ENCODE measurements at regions of chr13 and their contacts with region 1.

Region 1: GRCh38 chr13:40230833-40231266 is 435.6 kb downstream of the FOXO1 start:
- DNase-seq: no peak
- ATAC-seq: no peak
- H3K4me3 ChIP-seq: no peak overlapping the region
- H3K27ac ChIP-seq: peak overlapping the region; percentile 97 to 99 (median 98)
- H3K4me1 ChIP-seq: peaks cover 42 to 55% of the 10 kb centered on the region in 2 donors
- H3K27me3 ChIP-seq: no peaks in the 10 kb centered on the region
- CTCF ChIP-seq: no peak
- POLR2A ChIP-seq: no peak

Region 2: DNA sequence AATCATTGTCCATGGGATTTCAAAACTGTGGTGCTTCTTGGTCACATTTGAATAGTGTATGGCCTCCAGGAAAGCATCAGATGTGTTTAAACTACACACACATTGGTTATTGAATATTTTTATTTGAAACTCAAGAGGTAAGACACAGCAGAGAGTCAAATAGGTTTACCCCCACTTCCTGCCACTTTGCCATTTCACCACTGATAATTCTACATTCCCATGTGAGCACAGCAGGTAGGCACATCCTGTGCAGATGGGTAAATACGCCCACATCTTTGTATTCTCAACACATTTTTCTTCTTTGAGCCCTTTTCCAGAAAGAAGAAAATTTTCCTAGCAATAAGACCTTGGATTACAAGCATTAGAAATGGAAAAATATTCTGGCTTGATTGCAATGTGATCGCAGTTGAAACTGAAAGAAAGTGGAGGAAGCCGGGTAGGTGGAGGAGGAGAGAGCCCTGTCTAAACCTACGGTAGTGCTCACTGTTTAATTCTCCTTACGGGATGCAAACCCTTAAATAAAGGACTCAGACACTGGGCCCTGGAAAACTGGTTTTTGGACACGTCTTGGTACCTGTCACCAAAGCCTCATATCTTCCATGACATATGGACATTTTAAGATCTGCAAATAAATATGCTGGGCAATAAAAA is 407.7 kb before region 1 on chr13:
- in situ Hi-C with region 1: no loop called
- intact Hi-C with region 1: no loop called
- DNase-seq: no peak
- ATAC-seq: no peak
- H3K4me3 ChIP-seq: no peak overlapping the region
- H3K27ac ChIP-seq: no peak overlapping the region
- H3K4me1 ChIP-seq: no peaks in the 10 kb centered on the region
- H3K27me3 ChIP-seq: no peaks in the 10 kb centered on the region
- CTCF ChIP-seq: no peak
- POLR2A ChIP-seq: no peak

Region 3: GRCh38 chr13:40113644-40114304 is 117.1 kb before region 1 on chr13:
- in situ Hi-C with region 1: no loop called
- intact Hi-C with region 1: loop called (anchors 5 kb)
- DNase-seq: no peak
- ATAC-seq: peak; percentile 37 to 42
- H3K4me3 ChIP-seq: no peak overlapping the region
- H3K27ac ChIP-seq: peak overlapping the region in 2 of 4 donors; percentile 26 to 40
- H3K4me1 ChIP-seq: peaks cover 10 to 18% of the 10 kb centered on the region in 2 donors
- H3K27me3 ChIP-seq: no peaks in the 10 kb centered on the region
- CTCF ChIP-seq: no peak
- POLR2A ChIP-seq: no peak

Region 4: GRCh38 chr13:40445557-40445990 is 214.7 kb after region 1 on chr13:
- in situ Hi-C with region 1: loop called in 1 of 4 experiments (anchors 10 kb)
- intact Hi-C with region 1: no loop called
- DNase-seq: peak; percentile 29 to 72
- ATAC-seq: peak; percentile 46 to 48
- H3K4me3 ChIP-seq: no peak overlapping the region
- H3K27ac ChIP-seq: peak overlapping the region; percentile 19 to 45 (median 42)
- H3K4me1 ChIP-seq: peaks cover 30 to 34% of the 10 kb centered on the region in 2 donors
- H3K27me3 ChIP-seq: no peaks in the 10 kb centered on the region
- CTCF ChIP-seq: no peak
- POLR2A ChIP-seq: no peak

Measured in gastrocnemius medialis (tissue), 4 donors.